Right ventricle myocardium inferior (tissue), 1 donor: ENCODE measurements at regions of chrX and their contacts with region 1.

Region 1: DNA sequence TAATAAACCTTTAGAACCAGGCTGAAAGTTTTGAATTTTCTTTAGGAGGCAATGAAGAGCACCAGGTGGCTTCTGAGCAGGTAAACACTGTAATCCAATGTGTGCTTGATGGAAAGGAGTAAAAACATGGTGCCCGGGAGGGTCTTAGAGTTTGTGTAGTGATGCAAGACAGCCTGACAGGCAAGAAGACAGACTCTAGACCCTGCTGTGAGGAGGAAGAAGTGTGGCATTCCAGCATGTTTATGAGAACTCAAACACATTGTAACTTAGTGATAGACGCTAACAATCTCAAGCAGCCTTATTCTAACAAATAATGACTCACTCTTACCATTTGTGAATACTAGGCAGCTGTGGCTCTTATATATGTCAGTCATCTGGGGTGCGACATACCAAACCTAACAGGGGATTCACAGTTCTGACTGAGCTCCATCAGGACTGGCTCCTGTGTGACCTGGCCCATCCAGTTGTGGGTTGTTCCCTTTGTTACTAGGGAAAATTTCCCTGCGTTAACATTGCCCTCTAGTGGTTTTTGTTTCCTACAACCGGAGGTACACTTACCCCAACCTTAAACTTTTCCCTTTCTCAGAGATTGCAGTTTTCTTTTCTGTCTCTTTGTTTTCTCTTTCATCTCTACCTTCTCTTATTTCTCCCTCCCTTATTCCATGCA is 53.8 kb downstream of the VSIG4 start:
- DNase-seq: no peak
- ATAC-seq: peak; percentile 78

Region 2: GRCh38 chrX:65581661-65582339 is 404.3 kb before region 1 on chrX:
- intact Hi-C with region 1: loop called (anchors 1 kb)
- DNase-seq: no peak
- ATAC-seq: peak; percentile 71

Region 3: DNA sequence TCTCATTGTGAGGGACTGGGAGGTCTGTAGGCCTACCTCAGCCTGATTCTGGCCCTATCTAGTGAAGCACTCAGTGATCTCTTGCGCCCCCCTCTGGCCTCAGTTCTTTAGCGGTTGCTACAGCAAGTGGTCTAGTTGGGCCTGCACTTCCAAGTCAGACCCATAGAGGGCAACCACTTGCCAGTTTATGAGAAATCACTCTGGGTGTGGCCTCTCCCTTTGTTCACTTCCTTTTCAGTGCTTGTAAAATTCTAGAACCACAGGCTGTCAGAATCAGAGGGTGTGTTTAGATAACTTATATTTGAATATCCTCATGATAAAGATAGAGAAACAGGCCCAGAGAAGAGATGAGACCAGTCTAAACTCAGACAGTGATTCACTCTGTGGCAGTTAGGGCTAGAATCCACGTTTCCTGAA is 390.6 kb before region 1 on chrX:
- intact Hi-C with region 1: loop called (anchors 5 kb)
- DNase-seq: peak; percentile 93
- ATAC-seq: peak; percentile 94

Region 4: DNA sequence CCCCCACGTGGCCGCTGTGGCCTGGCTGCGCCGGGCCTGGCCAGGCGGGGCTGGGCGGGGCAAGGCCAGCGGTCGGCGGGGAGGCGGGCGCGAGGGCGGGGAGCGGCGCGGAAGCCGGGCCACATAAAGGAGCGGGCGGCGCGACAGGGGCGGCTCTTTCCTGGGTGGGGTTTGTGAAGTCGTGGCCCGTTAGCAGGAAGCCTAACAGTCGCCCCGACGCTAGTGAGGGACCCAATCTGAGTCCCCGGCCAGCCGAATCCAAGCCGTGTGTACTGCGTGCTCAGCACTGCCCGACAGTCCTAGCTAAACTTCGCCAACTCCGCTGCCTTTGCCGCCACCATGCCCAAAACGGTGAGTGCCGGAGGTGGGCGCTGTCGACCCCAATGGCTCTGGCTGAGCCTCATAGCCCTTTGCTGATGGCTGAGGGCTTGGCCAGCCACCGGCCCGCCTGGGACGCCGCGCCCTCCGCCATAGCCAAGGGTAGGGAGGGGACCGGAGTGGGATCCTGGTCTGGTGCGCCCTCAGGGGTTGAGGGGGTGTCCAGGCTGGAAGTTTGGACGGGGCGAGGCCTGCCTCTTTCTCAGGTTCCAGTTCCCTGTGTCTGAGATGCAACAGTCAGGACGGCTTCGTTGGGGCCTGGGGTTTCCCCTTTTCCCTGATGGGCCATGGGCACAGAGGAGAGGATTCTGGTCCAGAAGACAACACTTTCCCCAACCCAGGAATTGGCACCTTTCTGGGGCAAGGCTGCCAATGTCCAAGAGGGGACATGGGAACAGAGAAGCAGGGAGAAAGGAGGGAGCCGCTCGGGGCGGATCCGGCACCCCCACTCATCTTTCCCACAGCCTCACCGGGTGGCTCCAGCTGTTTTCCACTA is 318.3 kb before region 1 on chrX and contains the start of gene MSN:
- intact Hi-C with region 1: no loop called
- DNase-seq: peak; percentile 91
- ATAC-seq: peak; percentile 93
- total RNA-seq, gene MSN: 131 TPM

Region 5: GRCh38 chrX:65745992-65746391 is 240.1 kb before region 1 on chrX:
- intact Hi-C with region 1: loop called (anchors 10 kb)
- DNase-seq: no peak
- ATAC-seq: no peak

Region 6: GRCh38 chrX:66012094-66012534 is 26.1 kb after region 1 on chrX:
- intact Hi-C with region 1: no loop called
- DNase-seq: peak; percentile 50
- ATAC-seq: peak; percentile 31